Esophagus squamous epithelium (tissue), 5 donors: ENCODE measurements at regions of chr2 and their contacts with region 1.

Region 1: GRCh38 chr2:209556354-209556961 is 132.6 kb downstream of the MAP2 start:
- DNase-seq: no peak
- H3K4me3 ChIP-seq: no peak overlapping the region
- H3K27ac ChIP-seq: no peak overlapping the region
- H3K4me1 ChIP-seq: no peaks in the 10 kb centered on the region
- H3K27me3 ChIP-seq: no peaks in the 10 kb centered on the region
- CTCF ChIP-seq: peak in 5 of 6 experiments; percentile 13 to 55 (median 29)
- POLR2A ChIP-seq: no peak

Region 2: DNA sequence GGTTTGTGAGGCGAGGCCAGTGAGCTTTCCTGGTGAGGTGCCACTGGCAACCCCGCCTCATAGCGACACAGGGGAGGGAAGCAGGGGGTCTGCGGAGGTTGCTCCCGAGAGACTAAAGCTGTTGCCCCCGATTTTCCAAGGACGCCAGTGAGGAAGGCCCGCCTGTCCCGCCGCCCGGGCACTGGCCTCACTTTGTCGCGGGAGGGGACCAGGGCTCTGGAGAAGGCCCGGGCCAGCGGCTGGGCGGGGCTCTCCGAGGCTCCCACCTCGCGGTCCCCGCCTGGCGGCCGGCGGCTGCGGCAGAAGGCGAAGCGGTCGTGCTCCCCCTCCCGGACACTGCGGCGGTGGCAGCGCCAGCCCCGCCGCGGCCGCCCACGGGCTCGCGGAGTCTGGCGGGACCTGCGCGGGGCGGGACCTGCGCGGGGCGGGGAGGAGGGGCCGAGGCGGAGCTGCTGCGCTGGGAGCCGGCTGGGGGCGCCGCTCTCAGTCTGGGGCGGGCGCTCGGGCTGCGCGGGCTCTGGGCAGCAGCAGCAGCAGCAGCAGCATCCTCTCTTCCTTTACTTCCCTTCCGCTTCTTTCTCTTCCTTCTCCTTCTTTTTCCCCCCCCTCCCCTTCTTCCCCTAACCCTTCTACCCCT is 132.8 kb before region 1 on chr2 and contains the start of gene MAP2:
- intact Hi-C with region 1: loop called (anchors 10 kb)
- DNase-seq: no peak
- H3K4me3 ChIP-seq: peak within 1 kb of the TSS; percentile 53 to 69 (median 64)
- H3K27ac ChIP-seq: peak within 1 kb of the TSS; percentile 46 to 86 (median 76)
- H3K4me1 ChIP-seq: peaks cover 0 to 51% (median 16%) of the 10 kb centered on the region in 3 donors
- H3K27me3 ChIP-seq: no peaks in the 10 kb centered on the region
- CTCF ChIP-seq: peak; percentile 57 to 99 (median 94)
- POLR2A ChIP-seq: peak in 1 of 4 donors; percentile 62
- total RNA-seq, gene MAP2: 5.8 to 14.5 (median 8.8) TPM

Region 3: DNA sequence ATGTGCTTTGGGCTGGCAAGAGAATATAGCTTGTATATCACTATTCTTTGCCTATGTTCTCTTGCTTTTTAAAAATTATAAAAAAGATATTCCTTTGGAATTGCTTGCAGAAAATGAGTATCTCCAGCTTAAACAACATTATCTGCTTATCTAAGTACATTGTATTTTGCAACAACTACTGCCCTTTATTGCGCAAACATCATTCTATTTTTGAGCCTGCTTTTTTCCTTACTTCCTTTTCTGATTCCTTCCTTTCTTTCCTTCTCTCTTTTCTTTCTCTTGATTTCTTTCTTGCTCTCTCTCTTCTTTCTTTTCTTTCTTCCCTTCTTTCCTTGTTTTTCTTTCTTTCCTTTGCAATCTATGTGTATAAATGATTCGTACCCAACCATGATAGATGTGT is 289.2 kb after region 1 on chr2:
- intact Hi-C with region 1: no loop called
- DNase-seq: no peak
- H3K4me3 ChIP-seq: no peak overlapping the region
- H3K27ac ChIP-seq: no peak overlapping the region
- H3K4me1 ChIP-seq: no peaks in the 10 kb centered on the region
- H3K27me3 ChIP-seq: no peaks in the 10 kb centered on the region
- CTCF ChIP-seq: no peak
- POLR2A ChIP-seq: no peak